Transverse colon (tissue), 4 donors: ENCODE measurements at regions of chr1 and their contacts with region 1.

Region 1: DNA sequence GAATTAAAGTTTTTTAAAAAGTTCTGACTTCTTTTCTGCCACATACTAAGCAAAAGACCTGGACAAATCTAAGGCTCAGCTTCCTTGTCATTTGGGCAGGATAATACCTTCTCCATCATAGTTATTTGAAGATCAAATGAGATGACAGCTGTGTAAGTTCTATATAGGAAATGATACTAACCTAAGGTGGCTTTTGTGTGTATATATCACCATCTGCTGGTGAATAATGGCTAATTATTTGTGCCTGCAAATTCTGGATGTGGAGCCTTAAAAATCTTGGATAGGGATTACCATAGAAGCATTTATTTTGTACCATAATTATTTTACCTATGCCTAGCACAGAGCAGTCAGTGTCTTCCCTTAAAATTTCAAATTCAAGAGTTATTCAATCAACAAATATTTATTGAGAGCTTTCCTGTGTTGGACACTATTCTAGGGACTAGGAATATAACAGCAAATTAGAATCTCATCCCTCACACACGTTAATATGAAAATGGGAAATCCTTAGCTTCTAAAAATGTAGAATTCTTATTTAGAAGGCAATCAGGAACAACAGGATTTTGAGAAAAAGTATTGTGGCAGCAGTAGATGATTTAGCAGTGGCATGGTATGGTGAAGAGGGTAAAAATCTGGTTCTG is 89.8 kb downstream of the TMEM200B start:
- DNase-seq: no peak
- H3K4me3 ChIP-seq: no peak overlapping the region
- H3K27ac ChIP-seq: no peak overlapping the region
- H3K4me1 ChIP-seq: no peaks in the 10 kb centered on the region
- H3K27me3 ChIP-seq: no peaks in the 10 kb centered on the region
- CTCF ChIP-seq: peak; percentile 58 to 77 (median 64)
- EP300 ChIP-seq: no peak
- POLR2A ChIP-seq: no peak

Region 2: DNA sequence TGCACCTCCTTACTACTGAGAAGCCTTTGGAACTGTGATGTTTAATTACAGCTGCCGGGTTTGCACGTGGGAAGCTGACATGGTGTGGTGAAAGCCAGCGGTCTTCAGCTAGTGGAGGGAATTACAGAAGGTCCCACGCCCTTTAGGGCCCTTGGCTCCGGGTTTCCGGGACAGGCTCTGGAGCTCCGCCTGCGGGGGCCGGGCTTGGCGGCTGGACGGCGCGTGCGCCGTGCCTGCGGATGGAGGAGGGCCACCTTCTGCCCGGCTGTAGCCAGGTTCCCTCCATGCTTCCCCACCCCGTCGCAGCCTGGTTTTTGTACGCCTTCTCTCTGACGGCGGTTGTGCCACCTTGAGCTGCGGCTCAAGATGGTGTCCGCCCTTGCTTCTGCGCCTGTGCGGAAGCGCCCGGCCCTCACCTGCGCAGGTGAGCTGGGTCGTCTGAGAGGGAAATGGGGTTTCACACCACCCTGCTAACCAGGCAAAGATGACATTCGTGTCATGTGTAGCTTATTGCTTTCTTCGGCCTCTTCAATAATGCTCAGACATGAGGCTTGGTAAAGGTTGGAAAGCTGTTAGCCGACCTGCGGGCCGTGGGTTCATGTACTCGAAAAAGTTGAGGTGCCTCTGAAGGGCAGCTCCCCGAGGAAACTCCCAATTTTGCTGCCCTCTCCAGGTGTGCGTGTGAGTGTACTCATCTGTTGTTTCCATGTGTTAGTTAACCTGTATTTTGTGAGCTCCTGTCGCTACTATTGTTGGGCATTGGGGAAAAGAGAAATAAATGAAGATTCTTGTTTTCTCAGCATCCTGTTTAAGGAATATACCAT is 258.6 kb before region 1 on chr1:
- in situ Hi-C with region 1: loop called in 3 of 4 experiments (anchors 10 to 25 kb)
- intact Hi-C with region 1: no loop called
- DNase-seq: peak; percentile 86
- H3K4me3 ChIP-seq: peak overlapping the region; percentile 7 to 50 (median 39)
- H3K27ac ChIP-seq: peak overlapping the region; percentile 74 to 84 (median 78)
- H3K4me1 ChIP-seq: peaks cover 0 to 12% (median 12%) of the 10 kb centered on the region in 4 donors
- H3K27me3 ChIP-seq: no peaks in the 10 kb centered on the region
- CTCF ChIP-seq: peak in 1 of 5 experiments; percentile 13
- EP300 ChIP-seq: no peak
- POLR2A ChIP-seq: peak; percentile 69

Region 3: GRCh38 chr1:28877132-28877781 is 156.7 kb before region 1 on chr1:
- in situ Hi-C with region 1: loop called (anchors 5 to 10 kb)
- intact Hi-C with region 1: loop called (anchors 2 kb)
- DNase-seq: peak; percentile 84
- H3K4me3 ChIP-seq: no peak overlapping the region
- H3K27ac ChIP-seq: no peak overlapping the region
- H3K4me1 ChIP-seq: peaks cover 0 to 6% (median 1%) of the 10 kb centered on the region in 4 donors
- H3K27me3 ChIP-seq: no peaks in the 10 kb centered on the region
- CTCF ChIP-seq: peak; percentile 84 to 94 (median 94)
- EP300 ChIP-seq: no peak
- POLR2A ChIP-seq: no peak

Region 4: DNA sequence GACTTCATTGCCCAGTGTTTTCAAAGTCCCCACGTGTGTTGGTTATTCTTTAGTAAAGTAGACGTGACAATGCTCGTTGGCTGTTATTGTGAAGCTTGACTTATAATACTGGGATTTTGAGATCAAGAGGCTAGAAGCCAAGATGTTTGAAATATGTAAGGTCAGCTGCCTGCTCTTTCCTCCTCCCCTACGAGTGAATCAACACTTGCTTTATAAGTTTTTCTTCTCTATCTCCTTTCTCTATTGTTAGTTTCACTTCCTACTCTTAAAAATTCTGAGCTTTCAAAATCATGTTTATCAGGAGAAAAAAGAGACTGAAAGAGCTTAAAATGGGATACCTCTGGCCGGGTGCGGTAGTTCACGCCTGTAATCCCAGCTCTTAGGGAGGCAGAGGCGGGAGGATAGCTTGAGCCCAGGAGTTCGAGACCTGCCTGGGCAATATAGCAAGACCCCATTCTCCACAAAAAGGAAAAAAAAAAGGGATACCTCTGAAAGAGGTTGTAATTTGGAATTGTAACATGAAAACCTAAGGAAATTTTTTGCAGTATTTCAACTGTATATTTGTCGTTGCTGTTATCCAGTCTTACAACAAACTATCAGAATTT is 47.5 kb before region 1 on chr1:
- in situ Hi-C with region 1: no loop called
- intact Hi-C with region 1: no loop called
- DNase-seq: no peak
- H3K4me3 ChIP-seq: no peak overlapping the region
- H3K27ac ChIP-seq: no peak overlapping the region
- H3K4me1 ChIP-seq: peaks cover 0 to 4% (median 0%) of the 10 kb centered on the region in 4 donors
- H3K27me3 ChIP-seq: no peaks in the 10 kb centered on the region
- CTCF ChIP-seq: no peak
- EP300 ChIP-seq: no peak
- POLR2A ChIP-seq: no peak

Region 5: DNA sequence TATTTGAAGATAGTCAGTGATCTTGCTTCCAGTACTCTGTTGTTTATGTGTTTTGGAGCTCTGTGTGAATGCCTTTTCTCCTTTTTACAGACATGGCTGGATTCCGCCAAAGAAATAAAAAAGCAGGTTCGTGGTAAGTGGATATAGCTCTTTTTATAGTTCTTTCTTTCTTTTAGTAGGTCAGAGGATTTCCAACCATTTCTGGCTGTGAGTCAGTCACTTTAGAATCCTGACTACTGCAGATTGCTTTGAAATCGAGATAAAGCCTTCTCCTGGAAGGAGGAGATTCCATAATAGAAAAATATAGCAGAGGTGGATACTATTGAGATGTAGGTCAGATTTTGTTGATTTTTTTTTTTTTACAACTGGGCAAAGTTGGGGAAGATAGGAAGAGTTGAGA is 22.2 kb before region 1 on chr1:
- in situ Hi-C with region 1: no loop called
- intact Hi-C with region 1: loop called (anchors 1 kb)
- DNase-seq: no peak
- H3K4me3 ChIP-seq: no peak overlapping the region
- H3K27ac ChIP-seq: no peak overlapping the region
- H3K4me1 ChIP-seq: no peaks in the 10 kb centered on the region
- H3K27me3 ChIP-seq: no peaks in the 10 kb centered on the region
- CTCF ChIP-seq: no peak
- EP300 ChIP-seq: no peak
- POLR2A ChIP-seq: no peak

Region 6: DNA sequence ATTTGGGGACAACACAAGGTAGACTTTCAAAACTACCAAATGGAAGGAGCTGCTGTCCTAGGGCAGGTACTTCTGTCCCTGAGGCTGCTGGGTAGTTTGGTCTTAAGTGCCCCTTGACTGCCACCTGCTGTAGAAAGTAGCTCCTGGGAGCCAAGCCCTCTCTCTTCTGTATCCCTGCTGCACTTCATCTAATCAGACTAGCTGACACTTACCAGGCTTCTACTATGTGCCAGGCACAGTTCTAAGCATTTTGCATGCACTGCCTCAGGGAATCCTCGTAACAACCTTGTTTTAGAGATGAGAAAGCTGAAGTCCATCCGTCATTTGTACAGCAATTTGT is 163.6 kb after region 1 on chr1:
- in situ Hi-C with region 1: loop called in 2 of 4 experiments (anchors 10 kb)
- intact Hi-C with region 1: no loop called
- DNase-seq: peak; percentile 48
- H3K4me3 ChIP-seq: no peak overlapping the region
- H3K27ac ChIP-seq: peak overlapping the region in 1 of 4 donors; percentile 16
- H3K4me1 ChIP-seq: peaks cover 4 to 15% (median 6%) of the 10 kb centered on the region in 4 donors
- H3K27me3 ChIP-seq: no peaks in the 10 kb centered on the region
- CTCF ChIP-seq: peak; percentile 20 to 56 (median 48)
- EP300 ChIP-seq: no peak
- POLR2A ChIP-seq: no peak

Region 7: DNA sequence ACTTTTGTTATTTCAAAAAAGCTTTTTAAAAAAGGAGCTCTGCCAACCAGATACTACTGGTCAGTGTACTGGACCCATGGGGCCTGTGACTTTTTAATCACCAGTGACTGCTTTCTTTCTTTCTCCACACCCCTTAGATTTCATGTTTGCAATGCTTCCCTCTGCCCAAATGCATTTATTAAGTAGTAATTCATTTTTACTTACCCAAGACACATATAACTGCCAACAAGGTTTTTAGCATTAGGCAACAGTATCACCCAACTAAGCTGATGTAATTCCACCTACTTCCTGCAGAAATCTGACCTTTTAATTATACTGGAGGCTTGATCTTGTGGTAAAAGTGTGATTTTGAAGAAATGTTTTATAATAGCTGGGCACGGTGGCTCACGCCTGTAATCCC is 184.3 kb after region 1 on chr1:
- in situ Hi-C with region 1: no loop called
- intact Hi-C with region 1: no loop called
- DNase-seq: no peak
- H3K4me3 ChIP-seq: no peak overlapping the region
- H3K27ac ChIP-seq: no peak overlapping the region
- H3K4me1 ChIP-seq: no peaks in the 10 kb centered on the region
- H3K27me3 ChIP-seq: no peaks in the 10 kb centered on the region
- CTCF ChIP-seq: no peak
- EP300 ChIP-seq: no peak
- POLR2A ChIP-seq: no peak